ENCODE measurements at regions of chr22 and their contacts with region 1.

Region 1: GRCh38 chr22:42895087-42895486 is 38.0 kb upstream of the ARFGAP3 start:
- DNase-seq: no peak
- H3K4me3 Mint-ChIP-seq: no peak overlapping the region
- H3K27ac Mint-ChIP-seq: no peak overlapping the region
- H3K4me1 Mint-ChIP-seq: peaks cover 12% of the 10 kb centered on the region
- H3K27me3 Mint-ChIP-seq: no peaks in the 10 kb centered on the region
- CTCF ChIP-seq: no peak

Region 2: DNA sequence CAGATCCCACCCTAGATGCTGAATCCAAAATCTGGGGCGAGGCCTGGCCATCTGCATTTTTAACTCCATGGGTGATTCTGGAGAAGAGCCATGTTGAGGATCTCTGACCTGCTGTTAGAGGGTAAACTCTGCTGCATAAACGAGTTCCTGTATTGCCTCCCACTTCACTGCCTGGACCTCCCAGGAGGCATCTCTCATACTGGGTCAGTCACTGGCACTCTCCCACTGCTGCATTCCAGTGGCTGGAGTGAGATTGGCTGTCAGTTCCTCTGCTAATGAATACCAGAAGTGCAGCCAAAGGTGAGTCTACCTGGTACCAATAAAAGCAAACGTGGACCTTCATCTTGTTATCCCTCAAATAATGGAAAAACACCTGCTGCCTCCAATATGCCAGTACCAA is 290.7 kb before region 1 on chr22:
- CTCF ChIA-PET with region 1: no interaction called
- intact Hi-C with region 1: no loop called
- DNase-seq: no peak
- H3K4me3 Mint-ChIP-seq: no peak overlapping the region
- H3K27ac Mint-ChIP-seq: no peak overlapping the region
- H3K4me1 Mint-ChIP-seq: peaks cover 21% of the 10 kb centered on the region
- H3K27me3 Mint-ChIP-seq: no peaks in the 10 kb centered on the region
- CTCF ChIP-seq: no peak

Region 3: GRCh38 chr22:43014869-43015676 is 120.0 kb after region 1 on chr22 and contains the start of gene PACSIN2:
- CTCF ChIA-PET with region 1: interaction called, 10 read pairs
- intact Hi-C with region 1: no loop called
- DNase-seq: peak; percentile 99
- H3K4me3 Mint-ChIP-seq: peak within 1 kb of the TSS; percentile 69
- H3K27ac Mint-ChIP-seq: peak within 1 kb of the TSS; percentile 98
- H3K4me1 Mint-ChIP-seq: peaks cover 43% of the 10 kb centered on the region
- H3K27me3 Mint-ChIP-seq: no peaks in the 10 kb centered on the region
- CTCF ChIP-seq: no peak
- total RNA-seq, gene PACSIN2: 224 and 230 TPM in 2 replicates